Activated CD4-positive, alpha-beta T cell treated with anti-CD3 and anti-CD28 coated beads, Interleukin-2, amount 10 ng/mL, durations not matched to agents 24 days and 14 days (primary cell): ENCODE measurements at regions of chr13 and their contacts with region 1.

Region 1: GRCh38 chr13:48562296-48563066 is 29.6 kb upstream of the RCBTB2 start:
- DNase-seq: peak; percentile 94
- H3K4me3 Mint-ChIP-seq: peak overlapping the region; percentile 14
- H3K27ac Mint-ChIP-seq: peak overlapping the region; percentile 62
- H3K4me1 Mint-ChIP-seq: peaks cover 40% of the 10 kb centered on the region
- H3K27me3 Mint-ChIP-seq: peaks cover 59% of the 10 kb centered on the region

Region 2: GRCh38 chr13:48220981-48221685 is 341.3 kb before region 1 on chr13:
- intact Hi-C with region 1: loop called (anchors 2 kb)
- DNase-seq: peak; percentile 73
- H3K4me3 Mint-ChIP-seq: peak overlapping the region; percentile 69
- H3K27ac Mint-ChIP-seq: peak overlapping the region; percentile 78
- H3K4me1 Mint-ChIP-seq: peaks cover 35% of the 10 kb centered on the region
- H3K27me3 Mint-ChIP-seq: peaks cover 15% of the 10 kb centered on the region

Region 3: DNA sequence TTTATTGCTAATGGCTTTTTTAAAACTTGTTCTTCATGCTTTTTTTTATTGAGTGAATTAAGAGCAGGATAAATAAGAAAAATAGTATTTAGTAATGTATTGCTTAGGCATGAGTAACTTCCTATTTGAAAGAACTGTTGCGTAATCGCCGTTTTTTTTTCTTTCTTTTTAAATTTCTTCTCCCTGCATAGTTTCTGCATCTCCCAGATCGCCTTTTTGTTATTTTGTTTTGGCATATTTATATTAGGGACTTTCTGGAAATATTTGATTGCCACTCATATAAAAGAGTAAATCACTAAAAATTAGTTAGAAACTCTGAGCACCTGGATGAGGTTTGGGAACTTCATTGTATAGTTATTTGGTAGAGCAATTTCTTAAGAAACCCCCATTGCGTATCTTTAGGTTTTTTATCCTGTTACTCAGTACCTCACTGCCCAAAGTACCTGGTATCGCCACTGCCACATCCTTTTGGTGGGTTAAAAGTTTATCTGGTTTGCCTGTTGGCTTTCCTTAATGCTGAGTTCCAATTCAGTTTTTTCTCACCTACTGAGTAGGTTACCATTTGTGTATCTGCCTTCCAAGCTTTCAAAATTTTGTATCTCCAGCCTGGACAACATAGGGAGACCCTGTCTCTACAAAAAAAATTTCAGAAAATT is 113.4 kb before region 1 on chr13:
- intact Hi-C with region 1: loop called (anchors 5 kb)
- DNase-seq: no peak
- H3K4me3 Mint-ChIP-seq: peak overlapping the region; percentile 53
- H3K27ac Mint-ChIP-seq: no peak overlapping the region
- H3K4me1 Mint-ChIP-seq: peaks cover 18% of the 10 kb centered on the region
- H3K27me3 Mint-ChIP-seq: no peaks in the 10 kb centered on the region

Region 4: GRCh38 chr13:48505597-48506091 is 56.8 kb before region 1 on chr13:
- intact Hi-C with region 1: loop called (anchors 1 kb)
- DNase-seq: peak; percentile 89
- H3K4me3 Mint-ChIP-seq: peak overlapping the region; percentile 64
- H3K27ac Mint-ChIP-seq: peak overlapping the region; percentile 84
- H3K4me1 Mint-ChIP-seq: peaks cover 66% of the 10 kb centered on the region
- H3K27me3 Mint-ChIP-seq: peaks cover 7% of the 10 kb centered on the region

Region 5: GRCh38 chr13:48580185-48580803 is 17.8 kb after region 1 on chr13:
- intact Hi-C with region 1: loop called (anchors 2 kb)
- DNase-seq: peak; percentile 91
- H3K4me3 Mint-ChIP-seq: no peak overlapping the region
- H3K27ac Mint-ChIP-seq: no peak overlapping the region
- H3K4me1 Mint-ChIP-seq: peaks cover 12% of the 10 kb centered on the region
- H3K27me3 Mint-ChIP-seq: peaks cover 70% of the 10 kb centered on the region